Activated CD4-positive, alpha-beta T cell treated with anti-CD3 and anti-CD28 coated beads for 36 hours (primary cell): ENCODE measurements at regions of chr10 and their contacts with region 1.

Region 1: GRCh38 chr10:1056326-1057105 is at the start of gene WDR37:
- DNase-seq: peak; percentile 92
- ATAC-seq: peak; percentile 94
- H3K4me3 Mint-ChIP-seq: peak within 1 kb of the TSS; percentile 94
- H3K27ac Mint-ChIP-seq: peak within 1 kb of the TSS; percentile 92
- H3K4me1 Mint-ChIP-seq: peaks cover 76% of the 10 kb centered on the region
- H3K27me3 Mint-ChIP-seq: no peaks in the 10 kb centered on the region
- total RNA-seq, gene WDR37: 16.3 to 16.8 TPM

Region 2: GRCh38 chr10:987870-988666 is 68.4 kb before region 1 on chr10 and contains the start of gene GTPBP4:
- CTCF ChIA-PET with region 1: no interaction called
- POLR2A ChIA-PET with region 1: no interaction called
- intact Hi-C with region 1: loop called (anchors 1 to 2 kb)
- DNase-seq: peak; percentile 98
- ATAC-seq: peak; percentile 98
- H3K4me3 Mint-ChIP-seq: peak within 1 kb of the TSS; percentile 93
- H3K27ac Mint-ChIP-seq: peak within 1 kb of the TSS; percentile 96
- H3K4me1 Mint-ChIP-seq: peaks cover 40% of the 10 kb centered on the region
- H3K27me3 Mint-ChIP-seq: no peaks in the 10 kb centered on the region
- total RNA-seq, gene GTPBP4: 109 to 116 TPM

Region 3: DNA sequence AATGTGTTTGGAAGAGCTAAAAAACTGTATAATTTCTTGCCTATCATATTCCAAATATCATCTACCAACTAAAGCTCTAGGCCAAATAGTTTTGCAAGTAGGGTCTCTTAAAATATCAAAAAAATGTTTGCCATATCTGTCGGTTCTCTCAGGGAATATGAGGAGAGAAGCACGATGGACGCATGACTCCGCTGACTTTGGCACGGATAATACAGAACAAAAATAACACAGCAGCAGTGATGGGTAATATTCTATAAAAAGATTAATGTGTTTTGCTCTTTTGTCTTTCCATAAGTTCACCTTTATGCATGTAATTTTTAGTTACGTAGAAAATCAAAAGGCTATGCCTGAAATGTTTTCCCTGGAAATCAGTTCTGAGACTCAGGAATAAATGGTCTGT is 29.9 kb before region 1 on chr10:
- CTCF ChIA-PET with region 1: no interaction called
- POLR2A ChIA-PET with region 1: no interaction called
- intact Hi-C with region 1: no loop called
- DNase-seq: no peak
- ATAC-seq: no peak
- H3K4me3 Mint-ChIP-seq: no peak overlapping the region
- H3K27ac Mint-ChIP-seq: no peak overlapping the region
- H3K4me1 Mint-ChIP-seq: no peaks in the 10 kb centered on the region
- H3K27me3 Mint-ChIP-seq: no peaks in the 10 kb centered on the region

Region 4: DNA sequence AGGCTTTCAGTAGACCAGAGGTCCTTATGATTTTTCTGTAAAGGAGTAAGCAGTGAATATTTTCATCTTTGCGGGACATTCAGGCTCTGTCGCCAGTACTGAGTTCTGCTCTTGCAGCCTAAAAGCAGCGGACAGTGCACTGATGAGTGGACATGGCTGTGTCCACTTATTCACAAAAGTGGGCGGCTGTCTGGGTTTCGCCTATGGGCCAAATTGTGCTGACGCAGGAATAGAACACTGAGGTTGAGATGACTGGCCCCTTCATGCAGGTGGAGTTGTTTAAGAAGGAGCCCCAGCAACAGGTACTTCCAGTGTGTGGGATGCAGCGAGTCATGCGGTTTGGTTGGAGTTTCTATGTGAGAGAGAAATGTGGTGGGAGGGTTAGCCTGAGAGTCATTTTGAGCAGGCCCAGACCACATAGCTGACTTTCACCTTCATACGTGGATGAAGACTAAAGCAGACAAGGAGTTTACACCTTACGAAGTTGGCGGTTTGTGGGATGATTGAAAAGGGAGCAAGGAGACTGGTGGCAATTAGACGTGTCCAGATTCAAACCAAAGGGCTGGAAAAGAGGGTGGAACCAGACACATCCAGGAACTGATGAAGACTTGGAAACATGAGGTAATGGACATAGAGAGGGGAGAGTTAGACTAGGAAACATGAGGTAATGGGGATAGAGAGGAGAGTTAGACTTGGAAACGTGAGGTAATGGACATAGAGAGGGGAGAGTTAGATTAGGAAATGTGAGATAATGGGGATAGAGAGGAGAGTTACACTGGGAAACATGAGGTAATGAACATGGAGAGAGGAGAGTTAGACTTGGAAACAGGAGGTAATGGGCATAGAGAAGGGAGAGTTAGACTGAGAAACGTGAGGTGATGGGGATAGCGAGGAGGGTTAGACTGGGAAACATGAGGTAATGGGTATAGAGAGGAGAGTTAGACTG is 37.9 kb after region 1 on chr10:
- CTCF ChIA-PET with region 1: no interaction called
- POLR2A ChIA-PET with region 1: interaction called, 4 read pairs
- intact Hi-C with region 1: loop called in 1 of 2 experiments (anchors 2 kb)
- DNase-seq: peak; percentile 89
- ATAC-seq: peak; percentile 95
- H3K4me3 Mint-ChIP-seq: no peak overlapping the region
- H3K27ac Mint-ChIP-seq: no peak overlapping the region
- H3K4me1 Mint-ChIP-seq: peaks cover 4% of the 10 kb centered on the region
- H3K27me3 Mint-ChIP-seq: no peaks in the 10 kb centered on the region

Region 5: DNA sequence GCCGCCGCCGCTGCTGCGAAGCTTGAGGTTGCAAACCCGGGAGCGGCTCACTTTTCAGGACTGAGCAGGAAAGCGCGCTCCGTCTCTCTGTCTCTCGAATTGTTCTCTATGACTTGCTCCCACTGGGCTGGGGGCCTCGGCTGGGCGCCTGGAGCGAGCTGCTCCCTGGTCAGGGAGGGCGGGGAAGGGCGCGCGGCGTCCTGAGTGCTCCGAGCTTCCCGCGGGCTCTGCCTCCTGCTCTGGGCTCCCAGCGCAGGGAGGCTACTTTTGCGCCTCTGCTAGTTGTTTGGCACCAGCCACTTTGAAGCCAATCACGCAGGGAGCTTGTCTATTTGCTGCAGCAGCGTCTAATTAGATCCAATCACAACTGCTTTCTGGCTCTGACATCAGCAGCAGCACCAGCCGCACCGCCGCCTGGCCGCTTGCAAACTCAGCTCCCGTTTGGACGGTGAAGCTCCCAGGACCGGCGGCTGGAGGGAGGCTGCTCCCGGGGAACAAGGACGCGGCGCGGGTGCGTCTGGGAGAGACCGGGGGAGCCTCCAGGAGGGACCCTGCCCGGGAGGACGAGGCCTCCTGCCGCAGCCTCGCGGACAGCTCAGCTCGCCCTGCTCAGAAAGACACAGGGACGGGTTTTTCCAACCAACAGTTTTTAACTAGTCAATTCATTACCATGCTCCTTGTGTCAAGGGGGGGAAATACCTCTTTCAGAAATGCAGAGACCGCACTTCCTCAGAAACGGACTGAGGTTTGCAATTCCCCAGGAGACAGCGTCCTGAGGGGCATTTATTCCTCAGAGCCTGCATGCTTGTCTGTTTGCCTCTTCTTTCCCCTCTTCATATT is 680.9 kb after region 1 on chr10 and contains the start of gene ADARB2:
- CTCF ChIA-PET with region 1: no interaction called
- POLR2A ChIA-PET with region 1: no interaction called
- intact Hi-C with region 1: no loop called
- DNase-seq: peak; percentile 51
- ATAC-seq: peak; percentile 80
- H3K4me3 Mint-ChIP-seq: peak within 1 kb of the TSS; percentile 32
- H3K27ac Mint-ChIP-seq: no peak within 1 kb of the TSS
- H3K4me1 Mint-ChIP-seq: peaks cover 12% of the 10 kb centered on the region
- H3K27me3 Mint-ChIP-seq: peaks cover 68% of the 10 kb centered on the region
- total RNA-seq, gene ADARB2: not detected